Gastrocnemius medialis (tissue), 4 donors: ENCODE measurements at regions of chr5 and their contacts with region 1.

Region 1: GRCh38 chr5:169126376-169127043 is 174.4 kb downstream of the SLIT3 start:
- DNase-seq: no peak
- ATAC-seq: peak; percentile 14 to 53
- H3K4me3 ChIP-seq: no peak overlapping the region
- H3K27ac ChIP-seq: peak overlapping the region in 1 of 4 donors; percentile 33
- H3K4me1 ChIP-seq: peaks cover 7 to 9% of the 10 kb centered on the region in 2 donors
- H3K27me3 ChIP-seq: no peaks in the 10 kb centered on the region
- CTCF ChIP-seq: no peak
- POLR2A ChIP-seq: no peak

Region 2: GRCh38 chr5:169149317-169149716 is 22.8 kb after region 1 on chr5:
- in situ Hi-C with region 1: no loop called
- intact Hi-C with region 1: no loop called
- DNase-seq: no peak
- ATAC-seq: no peak
- H3K4me3 ChIP-seq: no peak overlapping the region
- H3K27ac ChIP-seq: no peak overlapping the region
- H3K4me1 ChIP-seq: peaks cover 0 to 17% of the 10 kb centered on the region in 2 donors
- H3K27me3 ChIP-seq: no peaks in the 10 kb centered on the region
- CTCF ChIP-seq: no peak
- POLR2A ChIP-seq: no peak

Region 3: DNA sequence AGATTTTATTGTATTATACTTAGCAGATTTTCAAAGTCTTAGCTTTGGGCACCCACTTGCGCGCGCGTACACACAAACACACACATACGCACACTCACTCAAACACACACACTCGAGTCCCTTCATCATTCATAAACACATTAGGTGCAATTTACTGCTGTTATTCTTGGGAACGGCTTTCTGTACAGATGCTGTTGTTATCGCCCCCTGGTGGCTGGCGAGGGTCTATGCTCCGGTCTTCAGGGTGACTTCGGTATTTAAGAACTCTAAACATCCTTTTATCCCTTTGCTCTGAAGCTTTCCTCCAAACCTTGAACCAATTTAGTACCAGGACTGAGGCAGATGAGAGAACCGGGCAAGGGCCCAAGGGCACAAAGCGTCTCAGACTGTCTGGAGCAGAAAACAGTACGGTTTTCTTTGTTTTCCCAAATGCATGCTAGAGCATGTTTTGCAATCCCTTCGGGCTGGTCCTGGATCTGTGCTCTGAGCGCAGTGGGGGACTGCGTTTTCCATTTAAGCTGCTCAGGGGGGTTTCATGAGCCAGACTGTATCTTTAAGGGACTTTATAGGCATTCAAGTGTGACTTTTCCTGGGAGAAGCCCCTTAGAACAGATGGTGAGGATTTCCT is 176.1 kb after region 1 on chr5:
- in situ Hi-C with region 1: no loop called
- intact Hi-C with region 1: loop called (anchors 10 kb)
- DNase-seq: peak; percentile 25 to 47
- ATAC-seq: peak in 1 of 2 donors; percentile 42
- H3K4me3 ChIP-seq: no peak overlapping the region
- H3K27ac ChIP-seq: no peak overlapping the region
- H3K4me1 ChIP-seq: peaks cover 0 to 6% of the 10 kb centered on the region in 2 donors
- H3K27me3 ChIP-seq: peaks cover 0 to 14% (median 4%) of the 10 kb centered on the region in 3 donors
- CTCF ChIP-seq: peak; percentile 53 to 85 (median 61)
- POLR2A ChIP-seq: no peak